ENCODE measurements at regions of chr21 and their contacts with region 1.

Region 1: DNA sequence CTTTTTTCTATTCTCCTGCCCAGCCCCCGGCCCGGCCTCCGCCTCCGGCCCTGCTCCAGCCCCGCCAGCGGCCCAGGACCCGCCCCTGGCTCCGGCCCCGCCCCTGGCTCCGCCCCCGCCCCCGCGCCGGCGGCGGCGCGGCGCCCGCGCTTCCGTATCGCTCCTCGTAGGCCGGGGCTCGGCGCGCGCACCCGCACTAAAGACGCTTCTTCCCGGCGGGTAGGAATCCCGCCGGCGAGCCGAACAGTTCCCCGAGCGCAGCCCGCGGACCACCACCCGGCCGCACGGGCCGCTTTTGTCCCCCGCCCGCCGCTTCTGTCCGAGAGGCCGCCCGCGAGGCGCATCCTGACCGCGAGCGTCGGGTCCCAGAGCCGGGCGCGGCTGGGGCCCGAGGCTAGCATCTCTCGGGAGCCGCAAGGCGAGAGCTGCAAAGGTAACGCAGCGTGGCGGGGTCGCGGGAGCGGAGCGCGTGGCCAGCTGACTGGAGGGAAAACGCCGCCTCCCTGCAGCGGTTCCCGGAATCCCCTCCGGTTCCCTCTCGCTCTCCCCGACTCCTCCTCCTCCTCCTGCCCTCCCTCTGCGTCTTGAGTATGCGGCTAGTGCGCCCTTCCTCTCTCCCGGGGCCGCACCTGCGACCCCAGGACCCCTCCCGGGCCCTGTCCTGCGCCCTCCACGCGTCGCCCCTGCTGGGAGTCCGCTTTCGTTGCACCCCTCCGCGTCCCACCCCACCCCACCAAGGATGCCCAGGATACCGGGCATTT is at the start of gene IFNAR2:
- DNase-seq: peak; percentile 68
- H3K4me3 Mint-ChIP-seq: peak within 1 kb of the TSS; percentile 88
- H3K27ac Mint-ChIP-seq: peak within 1 kb of the TSS; percentile 87
- H3K4me1 Mint-ChIP-seq: peaks cover 49% of the 10 kb centered on the region
- H3K27me3 Mint-ChIP-seq: peaks cover 5% of the 10 kb centered on the region
- total RNA-seq, gene IFNAR2: 33.3 and 33.5 TPM in 2 replicates

Region 2: DNA sequence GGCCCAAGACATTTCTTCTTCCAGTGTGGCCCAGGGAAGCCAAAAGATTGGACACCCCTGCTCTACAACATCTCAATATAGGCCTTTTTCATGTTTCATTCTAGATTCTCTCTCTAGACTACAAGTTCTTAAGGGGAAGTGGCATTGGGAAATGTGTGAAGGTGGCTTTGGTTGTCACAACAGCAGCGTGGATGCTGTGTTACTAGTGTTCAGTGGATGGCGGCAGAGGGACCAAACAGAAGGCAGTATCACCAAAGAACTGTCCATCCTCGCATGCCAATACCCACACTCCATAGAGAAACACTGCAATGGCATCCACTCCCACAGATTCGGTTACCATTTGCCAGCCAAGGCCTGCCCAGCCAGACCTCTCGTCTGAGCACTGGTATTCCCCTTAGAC is 24.5 kb before region 1 on chr21:
- intact Hi-C with region 1: loop called (anchors 1 kb)
- DNase-seq: no peak
- H3K4me3 Mint-ChIP-seq: peak overlapping the region; percentile 24
- H3K27ac Mint-ChIP-seq: peak overlapping the region; percentile 84
- H3K4me1 Mint-ChIP-seq: peaks cover 28% of the 10 kb centered on the region
- H3K27me3 Mint-ChIP-seq: no peaks in the 10 kb centered on the region

Region 3: DNA sequence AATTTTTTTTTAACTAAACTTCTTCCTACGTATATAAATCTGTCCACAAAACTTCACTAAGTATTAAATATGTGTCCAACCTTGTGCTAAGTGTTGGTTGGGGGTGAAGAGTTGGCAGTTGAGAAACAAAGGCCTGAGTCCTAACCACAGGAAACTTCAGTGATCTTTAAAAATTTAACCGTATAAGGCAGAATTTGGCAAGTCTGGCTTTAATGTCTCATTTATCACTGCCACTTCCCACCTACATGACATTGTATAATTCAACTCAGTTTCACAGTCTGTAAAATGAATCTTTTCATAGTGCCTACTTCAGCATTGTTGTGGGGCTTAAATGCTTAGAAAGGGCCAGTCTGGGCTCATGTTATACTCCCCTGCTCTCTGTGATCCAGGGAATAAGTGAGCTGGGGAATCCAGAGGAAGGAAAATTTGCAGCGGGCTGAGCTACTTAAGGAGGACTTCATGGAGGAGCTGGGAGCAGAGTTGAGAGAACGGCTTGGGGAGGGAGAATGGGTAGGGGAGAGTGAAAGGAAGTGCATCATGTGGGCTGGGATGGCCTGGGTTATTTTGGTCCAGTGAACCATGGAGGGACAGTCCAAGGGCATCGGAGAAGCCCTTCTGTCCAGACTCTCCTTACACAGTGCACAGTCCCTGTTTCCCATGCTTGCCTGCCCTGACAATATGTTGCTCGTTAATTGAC is 14.3 kb after region 1 on chr21:
- intact Hi-C with region 1: loop called (anchors 2 kb)
- DNase-seq: no peak
- H3K4me3 Mint-ChIP-seq: peak overlapping the region; percentile 64
- H3K27ac Mint-ChIP-seq: peak overlapping the region; percentile 90
- H3K4me1 Mint-ChIP-seq: peaks cover 72% of the 10 kb centered on the region
- H3K27me3 Mint-ChIP-seq: no peaks in the 10 kb centered on the region

Region 4: DNA sequence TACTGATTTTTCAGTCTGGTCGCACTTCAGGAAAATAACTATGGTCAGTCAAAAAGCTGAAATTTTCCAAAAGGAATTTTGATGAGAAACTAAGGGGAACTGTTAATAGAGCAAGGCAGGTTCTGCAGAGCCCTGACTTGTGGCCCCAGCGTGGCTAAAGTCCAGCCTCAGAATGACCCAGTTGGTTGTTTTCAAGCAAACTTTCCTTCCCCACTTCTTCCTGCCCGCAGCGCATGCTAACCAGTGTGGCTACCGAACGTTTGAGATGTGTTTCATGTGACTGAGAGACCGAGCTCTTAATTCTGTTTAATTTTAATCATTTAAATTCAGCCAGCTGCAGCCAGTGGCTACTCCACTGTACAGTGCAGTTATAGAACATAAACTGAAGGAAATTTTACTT is 30.0 kb after region 1 on chr21:
- intact Hi-C with region 1: loop called (anchors 1 kb)
- DNase-seq: no peak
- H3K4me3 Mint-ChIP-seq: no peak overlapping the region
- H3K27ac Mint-ChIP-seq: no peak overlapping the region
- H3K4me1 Mint-ChIP-seq: peaks cover 47% of the 10 kb centered on the region
- H3K27me3 Mint-ChIP-seq: no peaks in the 10 kb centered on the region

Region 5: GRCh38 chr21:33266050-33266788 is 36.3 kb after region 1 on chr21 and contains the start of gene IL10RB:
- intact Hi-C with region 1: loop called (anchors 1 kb)
- DNase-seq: peak; percentile 66
- H3K4me3 Mint-ChIP-seq: peak within 1 kb of the TSS; percentile 97
- H3K27ac Mint-ChIP-seq: peak within 1 kb of the TSS; percentile 92
- H3K4me1 Mint-ChIP-seq: peaks cover 33% of the 10 kb centered on the region
- H3K27me3 Mint-ChIP-seq: no peaks in the 10 kb centered on the region
- total RNA-seq, gene IL10RB: 20.5 and 21.4 TPM in 2 replicates